ENCODE measurements at regions of chr7 and their contacts with region 1.

Region 1: GRCh38 chr7:32347244-32347828 is 142.8 kb downstream of the LSM5 start:
- DNase-seq: peak in 1 of 2 experiments; percentile 4
- H3K4me3 ChIP-seq: no peak overlapping the region
- H3K27ac ChIP-seq: no peak overlapping the region
- H3K4me1 ChIP-seq: no peaks in the 10 kb centered on the region
- H3K27me3 ChIP-seq: peaks cover 11% of the 10 kb centered on the region; the same call in 1 of the 2 replicates
- CTCF ChIP-seq: peak; percentile 92

Region 2: DNA sequence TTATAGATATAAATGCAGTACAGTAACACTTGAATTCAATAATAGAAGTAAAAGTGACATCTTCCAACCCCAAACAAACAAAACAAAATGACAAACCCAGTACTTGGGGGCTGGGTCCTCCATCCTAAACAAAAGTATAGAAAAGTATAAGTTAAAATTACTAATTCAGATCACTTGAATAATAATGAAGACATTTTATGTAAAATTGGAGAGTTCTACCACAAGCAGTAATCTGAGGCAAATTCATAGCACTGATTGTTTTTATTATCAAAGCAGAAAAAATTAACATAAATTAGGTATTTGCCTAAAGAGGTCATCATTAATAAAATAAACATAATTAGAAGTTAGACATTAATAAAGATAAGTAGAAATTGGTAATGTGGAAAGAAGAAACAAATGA is 751.9 kb before region 1 on chr7:
- CTCF ChIA-PET with region 1: no interaction called
- POLR2A ChIA-PET with region 1: no interaction called
- intact Hi-C with region 1: no loop called
- DNase-seq: no peak
- H3K4me3 ChIP-seq: no peak overlapping the region
- H3K27ac ChIP-seq: no peak overlapping the region
- H3K4me1 ChIP-seq: no peaks in the 10 kb centered on the region
- H3K27me3 ChIP-seq: 0 out of 2 replicates have a peak, but pooled peaks cover 12% of the 10 kb centered on the region
- CTCF ChIP-seq: no peak

Region 3: DNA sequence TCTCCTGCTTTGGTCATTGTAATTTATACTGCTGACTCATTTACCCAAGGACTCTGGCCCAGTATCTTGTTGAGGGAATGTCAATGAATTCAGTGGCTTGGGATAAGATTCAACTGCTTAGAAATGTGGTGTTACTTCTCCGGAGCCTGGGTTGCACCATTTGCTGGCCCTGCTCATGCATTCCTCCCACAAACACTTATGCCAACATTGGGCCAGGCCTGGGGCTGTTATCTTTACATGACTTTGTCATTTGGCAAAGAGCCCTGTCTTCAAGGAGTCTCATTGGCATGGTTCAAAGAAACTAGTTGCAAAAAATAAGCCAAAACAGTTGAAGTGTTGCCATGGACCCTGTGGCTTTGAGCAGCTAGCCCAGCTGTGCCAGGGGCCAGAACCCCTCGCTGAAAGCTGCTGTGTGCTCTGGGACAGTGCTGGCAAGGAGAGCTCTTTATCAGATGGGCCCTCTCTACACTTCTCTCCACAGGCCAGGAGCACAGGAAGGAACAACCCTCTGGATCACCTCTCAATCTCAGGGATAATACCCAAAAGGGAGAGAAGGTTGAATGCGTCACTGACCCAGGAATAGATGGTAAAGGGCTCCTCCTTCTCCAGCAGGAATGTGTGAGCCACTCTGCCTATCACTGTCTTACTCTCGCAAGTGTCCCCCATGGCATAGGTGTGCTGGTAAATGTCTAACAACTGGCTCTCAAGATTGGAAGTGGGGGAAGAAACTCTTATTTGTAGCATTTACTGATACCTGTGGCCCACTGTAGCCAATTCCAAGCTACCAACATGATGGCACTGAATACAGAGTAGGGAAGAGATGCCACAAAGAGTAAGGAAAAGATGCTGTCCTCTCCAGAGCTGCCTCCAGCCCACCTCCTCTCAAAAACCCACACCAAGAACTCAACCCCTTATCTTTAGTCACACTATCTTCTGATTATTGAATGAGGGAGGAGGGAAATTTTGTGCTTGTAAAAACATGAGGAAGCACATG is 253.6 kb before region 1 on chr7:
- CTCF ChIA-PET with region 1: interaction called, 13 read pairs
- POLR2A ChIA-PET with region 1: no interaction called
- intact Hi-C with region 1: no loop called
- DNase-seq: no peak
- H3K4me3 ChIP-seq: no peak overlapping the region
- H3K27ac ChIP-seq: no peak overlapping the region
- H3K4me1 ChIP-seq: no peaks in the 10 kb centered on the region
- H3K27me3 ChIP-seq: no peaks in the 10 kb centered on the region
- CTCF ChIP-seq: no peak

Region 4: DNA sequence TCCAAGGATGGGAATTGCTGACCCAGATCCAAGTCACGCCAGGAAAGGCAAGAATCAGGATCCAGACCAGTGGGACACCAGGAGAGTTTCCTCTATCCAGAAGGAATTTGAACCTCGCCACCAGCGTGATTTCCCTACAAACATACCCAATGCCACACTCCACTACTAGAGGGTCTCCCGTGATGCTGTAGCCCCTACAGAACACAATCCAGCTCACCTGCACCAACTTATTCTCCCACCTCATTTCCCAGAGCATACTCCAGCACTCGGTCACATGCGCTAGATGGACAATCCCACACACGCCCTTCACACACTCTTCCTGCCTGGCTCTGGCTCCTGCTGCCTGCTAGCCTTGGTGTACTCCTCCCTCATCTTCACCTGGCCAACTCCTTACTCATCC is 135.0 kb before region 1 on chr7:
- CTCF ChIA-PET with region 1: no interaction called
- POLR2A ChIA-PET with region 1: no interaction called
- intact Hi-C with region 1: loop called (anchors 5 kb)
- DNase-seq: no peak
- H3K4me3 ChIP-seq: no peak overlapping the region
- H3K27ac ChIP-seq: no peak overlapping the region
- H3K4me1 ChIP-seq: no peaks in the 10 kb centered on the region
- H3K27me3 ChIP-seq: peaks cover 41% of the 10 kb centered on the region
- CTCF ChIP-seq: no peak

Region 5: DNA sequence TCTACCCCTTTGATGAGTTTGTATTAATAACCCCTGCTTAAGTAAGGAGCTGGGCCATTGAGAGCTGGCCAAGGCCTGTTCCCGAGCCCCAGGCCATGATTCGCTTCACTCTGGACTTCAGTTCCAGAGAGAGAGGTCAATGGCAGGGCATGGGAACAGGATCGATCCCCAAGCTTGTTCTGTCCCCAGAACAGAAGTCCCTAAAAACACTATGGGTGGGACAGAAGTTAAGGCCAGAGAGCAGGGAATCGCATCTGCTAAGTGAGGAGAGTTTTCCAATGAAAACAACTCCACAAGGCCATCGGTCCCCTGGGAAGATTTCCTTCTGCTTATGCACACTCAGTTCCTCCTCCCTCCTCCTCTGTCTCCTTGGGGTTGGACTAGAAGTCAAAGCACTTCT is 16.7 kb before region 1 on chr7:
- CTCF ChIA-PET with region 1: no interaction called
- POLR2A ChIA-PET with region 1: no interaction called
- intact Hi-C with region 1: no loop called
- DNase-seq: no peak
- H3K4me3 ChIP-seq: no peak overlapping the region
- H3K27ac ChIP-seq: no peak overlapping the region
- H3K4me1 ChIP-seq: no peaks in the 10 kb centered on the region
- H3K27me3 ChIP-seq: peaks cover 33% of the 10 kb centered on the region
- CTCF ChIP-seq: no peak